Endothelial cell of umbilical vein (primary cell): ENCODE measurements at regions of chr4 and their contacts with region 1.

Region 1: DNA sequence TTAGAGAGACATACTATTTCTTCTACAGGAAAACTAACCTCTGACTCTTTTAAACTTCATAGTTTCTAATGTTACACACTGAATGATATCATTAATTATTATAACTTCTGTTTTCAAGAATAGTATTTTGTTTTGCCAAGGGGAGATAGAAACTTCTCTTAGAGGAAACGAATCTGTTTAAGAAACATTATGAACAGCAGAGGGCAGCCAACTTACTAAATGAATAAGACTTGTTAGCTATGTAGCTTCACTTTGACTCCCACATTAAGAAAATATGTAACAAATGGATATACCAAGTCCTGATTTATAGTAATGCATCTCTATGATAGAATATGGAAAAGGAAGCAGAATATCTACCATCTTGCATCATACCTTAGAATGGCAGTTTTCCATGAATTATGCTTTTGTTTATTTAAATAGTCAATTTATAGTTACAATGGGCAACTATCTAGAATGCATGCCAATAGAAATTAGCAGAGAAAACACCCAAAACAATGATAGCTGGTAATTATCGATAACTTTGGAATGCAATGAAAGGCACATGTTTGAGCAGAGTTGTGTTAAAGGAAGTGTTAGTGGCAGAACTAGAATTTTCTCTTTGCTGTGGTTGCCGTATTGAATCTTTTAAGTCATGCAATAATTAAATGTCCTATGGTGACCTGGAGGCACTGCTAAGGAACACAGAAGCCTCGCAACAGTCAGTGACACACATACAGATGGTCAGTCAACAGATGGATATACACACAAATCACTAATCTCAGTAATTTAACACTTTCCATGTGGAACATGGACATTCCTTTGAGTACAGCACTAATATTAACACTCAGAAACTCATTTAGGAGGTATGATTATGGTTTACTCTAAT is 105.7 kb upstream of the PDLIM3 start:
- DNase-seq: peak; percentile 69
- H3K4me3 ChIP-seq: no peak overlapping the region
- H3K27ac ChIP-seq: no peak overlapping the region
- H3K4me1 ChIP-seq: no peaks in the 10 kb centered on the region
- H3K27me3 ChIP-seq: no peaks in the 10 kb centered on the region
- CTCF ChIP-seq: peak in 1 of 2 donors; percentile 33
- POLR2A ChIP-seq: no peak

Region 2: DNA sequence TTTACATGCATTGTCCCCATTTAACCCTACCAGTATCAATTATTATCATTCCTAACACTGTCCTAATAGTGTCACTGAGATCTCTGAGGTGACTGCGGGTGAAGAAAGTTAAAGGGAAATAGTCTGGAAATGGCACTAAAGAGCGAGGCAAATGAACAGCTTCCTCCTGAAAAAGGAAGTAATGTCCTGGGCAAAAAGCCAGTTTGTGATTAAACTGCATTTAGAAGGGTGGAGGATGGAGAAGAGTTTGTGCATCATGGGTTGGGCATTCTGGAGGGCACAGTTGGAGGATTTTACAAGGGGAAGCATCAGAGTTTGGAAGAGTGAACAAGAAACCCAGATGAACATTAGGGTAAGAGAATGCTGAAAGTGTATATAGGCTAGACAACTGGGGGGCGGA is 558.5 kb before region 1 on chr4:
- CTCF ChIA-PET with region 1: no interaction called
- POLR2A ChIA-PET with region 1: no interaction called
- dilution Hi-C with region 1: no loop called
- intact Hi-C with region 1: no loop called
- DNase-seq: no peak
- H3K4me3 ChIP-seq: no peak overlapping the region
- H3K27ac ChIP-seq: no peak overlapping the region
- H3K4me1 ChIP-seq: no peaks in the 10 kb centered on the region
- H3K27me3 ChIP-seq: peaks cover 2 to 8% of the 10 kb centered on the region in 2 experiments
- CTCF ChIP-seq: no peak
- POLR2A ChIP-seq: no peak

Region 3: DNA sequence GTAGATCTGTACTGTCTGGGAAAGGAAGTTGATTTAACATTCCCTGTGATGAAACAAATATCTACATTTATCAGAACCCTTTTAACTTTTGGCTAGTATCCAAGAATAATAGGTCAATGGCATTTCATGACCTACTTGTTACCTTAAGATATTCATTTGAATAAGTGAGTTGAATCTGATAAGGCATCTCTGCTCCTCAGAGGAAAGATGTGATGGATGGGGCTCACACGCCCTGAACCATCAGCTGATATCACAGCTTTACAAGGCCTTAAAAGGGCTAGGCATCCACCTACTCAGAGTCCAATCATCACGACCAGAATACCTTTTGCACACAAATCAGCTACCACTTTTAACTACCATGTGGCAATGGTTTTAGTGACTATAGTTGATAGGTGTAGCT is 15.5 kb before region 1 on chr4:
- CTCF ChIA-PET with region 1: interaction called, 14 read pairs
- POLR2A ChIA-PET with region 1: no interaction called
- dilution Hi-C with region 1: no loop called
- intact Hi-C with region 1: no loop called
- DNase-seq: peak; percentile 7
- H3K4me3 ChIP-seq: no peak overlapping the region
- H3K27ac ChIP-seq: no peak overlapping the region
- H3K4me1 ChIP-seq: no peaks in the 10 kb centered on the region
- H3K27me3 ChIP-seq: no peaks in the 10 kb centered on the region
- CTCF ChIP-seq: no peak
- POLR2A ChIP-seq: no peak

Region 4: DNA sequence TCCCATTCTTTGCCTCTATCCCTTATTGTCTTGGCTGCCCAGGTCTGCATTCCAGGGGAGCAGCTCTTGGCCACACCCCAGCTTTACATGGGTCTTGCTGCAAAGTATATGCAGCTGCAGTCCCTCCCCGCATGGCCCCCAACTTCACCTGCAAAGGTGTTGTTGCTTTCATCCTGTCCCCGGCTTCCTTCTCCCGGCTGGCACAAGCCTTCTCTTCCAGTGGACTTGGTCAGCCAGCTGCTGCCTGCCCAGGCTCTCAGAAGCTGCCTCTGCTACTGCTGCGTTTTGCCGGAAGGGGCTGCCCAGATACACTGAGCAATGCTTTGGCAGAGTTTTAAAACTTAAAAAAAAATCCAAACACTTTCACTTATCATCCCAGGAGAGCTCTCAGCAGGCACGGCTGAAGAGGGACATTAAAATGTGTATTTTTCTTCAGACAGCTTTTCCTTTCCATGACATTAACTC is 15.5 kb after region 1 on chr4:
- CTCF ChIA-PET with region 1: interaction called, 16 read pairs
- POLR2A ChIA-PET with region 1: no interaction called
- dilution Hi-C with region 1: no loop called
- intact Hi-C with region 1: no loop called
- DNase-seq: peak; percentile 61
- H3K4me3 ChIP-seq: peak overlapping the region in 1 of 3 experiments; percentile 5
- H3K27ac ChIP-seq: no peak overlapping the region
- H3K4me1 ChIP-seq: peaks cover 4% of the 10 kb centered on the region
- H3K27me3 ChIP-seq: no peaks in the 10 kb centered on the region
- CTCF ChIP-seq: peak; percentile 28 to 43
- POLR2A ChIP-seq: no peak

Region 5: GRCh38 chr4:186029571-186030398 is 388.7 kb after region 1 on chr4:
- CTCF ChIA-PET with region 1: interaction called, 16 read pairs
- POLR2A ChIA-PET with region 1: no interaction called
- dilution Hi-C with region 1: loop called (anchors 25 kb)
- intact Hi-C with region 1: no loop called
- DNase-seq: peak; percentile 85
- H3K4me3 ChIP-seq: peak overlapping the region in 1 of 3 experiments; percentile 1
- H3K27ac ChIP-seq: peak overlapping the region; percentile 42
- H3K4me1 ChIP-seq: peaks cover 21% of the 10 kb centered on the region
- H3K27me3 ChIP-seq: no peaks in the 10 kb centered on the region
- CTCF ChIP-seq: no peak
- POLR2A ChIP-seq: no peak

Region 6: GRCh38 chr4:186137196-186137794 is 496.3 kb after region 1 on chr4:
- CTCF ChIA-PET with region 1: interaction called, 15 read pairs
- POLR2A ChIA-PET with region 1: no interaction called
- dilution Hi-C with region 1: no loop called
- intact Hi-C with region 1: no loop called
- DNase-seq: peak; percentile 15
- H3K4me3 ChIP-seq: no peak overlapping the region
- H3K27ac ChIP-seq: no peak overlapping the region
- H3K4me1 ChIP-seq: no peaks in the 10 kb centered on the region
- H3K27me3 ChIP-seq: peaks cover 2 to 4% of the 10 kb centered on the region in 2 experiments
- CTCF ChIP-seq: peak; percentile 28 to 34
- POLR2A ChIP-seq: no peak